CD8-positive, alpha-beta T cell (primary cell): ENCODE measurements at regions of chr2 and their contacts with region 1.

Region 1: DNA sequence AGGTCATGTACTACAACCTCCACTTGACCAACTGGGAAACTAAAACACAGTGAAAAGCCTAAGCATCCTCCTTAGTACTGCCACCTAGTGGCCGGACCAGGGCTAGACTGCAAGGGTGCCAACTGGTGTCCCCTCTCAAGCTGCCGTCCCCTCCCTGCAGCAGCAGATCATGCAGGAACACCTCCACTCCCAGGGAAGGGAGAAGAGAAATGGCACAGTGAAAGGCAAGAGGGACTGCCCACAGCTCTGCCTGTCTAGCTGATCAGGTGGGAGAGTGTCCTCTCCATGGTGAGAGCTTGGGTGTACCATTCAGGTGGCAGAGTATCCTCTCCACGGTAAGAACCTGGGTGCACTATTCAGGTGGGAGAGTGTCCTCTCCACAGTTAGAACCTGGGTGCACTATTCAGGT is 78.1 kb downstream of the AAK1 start:
- DNase-seq: peak; percentile 43 to 83 (median 73)
- ATAC-seq: peak; percentile 79
- H3K4me3 ChIP-seq: no peak overlapping the region
- H3K4me3 Mint-ChIP-seq: peak overlapping the region; percentile 63
- H3K27ac ChIP-seq: no peak overlapping the region
- H3K27ac Mint-ChIP-seq: peak overlapping the region; percentile 72
- H3K4me1 ChIP-seq: peaks cover 91% of the 10 kb centered on the region
- H3K4me1 Mint-ChIP-seq: peaks cover 92% of the 10 kb centered on the region
- H3K27me3 ChIP-seq: no peaks in the 10 kb centered on the region
- H3K27me3 Mint-ChIP-seq: no peaks in the 10 kb centered on the region
- CTCF ChIP-seq: peak; percentile 80

Region 2: GRCh38 chr2:68589963-68590362 is 975.5 kb before region 1 on chr2:
- CTCF ChIA-PET with region 1: no interaction called
- POLR2A ChIA-PET with region 1: no interaction called
- intact Hi-C with region 1: no loop called
- DNase-seq: no peak
- ATAC-seq: no peak
- H3K4me3 ChIP-seq: no peak overlapping the region
- H3K4me3 Mint-ChIP-seq: no peak overlapping the region
- H3K27ac ChIP-seq: no peak overlapping the region
- H3K27ac Mint-ChIP-seq: no peak overlapping the region
- H3K4me1 ChIP-seq: no peaks in the 10 kb centered on the region
- H3K4me1 Mint-ChIP-seq: peaks cover 3% of the 10 kb centered on the region
- H3K27me3 ChIP-seq: no peaks in the 10 kb centered on the region
- H3K27me3 Mint-ChIP-seq: no peaks in the 10 kb centered on the region
- CTCF ChIP-seq: no peak

Region 3: GRCh38 chr2:69581774-69582581 is 16.5 kb after region 1 on chr2:
- CTCF ChIA-PET with region 1: interaction called, 45 read pairs
- POLR2A ChIA-PET with region 1: interaction called, 7 read pairs
- intact Hi-C with region 1: loop called in 1 of 2 experiments (anchors 2 kb)
- DNase-seq: peak in 3 of 9 experiments; percentile 20 to 49 (median 47)
- ATAC-seq: no peak
- H3K4me3 ChIP-seq: no peak overlapping the region
- H3K4me3 Mint-ChIP-seq: peak overlapping the region; percentile 44
- H3K27ac ChIP-seq: peak overlapping the region in 1 of 2 experiments; percentile 4
- H3K27ac Mint-ChIP-seq: peak overlapping the region; percentile 82
- H3K4me1 ChIP-seq: peaks cover 95% of the 10 kb centered on the region
- H3K4me1 Mint-ChIP-seq: peaks cover 89% of the 10 kb centered on the region
- H3K27me3 ChIP-seq: no peaks in the 10 kb centered on the region
- H3K27me3 Mint-ChIP-seq: no peaks in the 10 kb centered on the region
- CTCF ChIP-seq: no peak

Region 4: DNA sequence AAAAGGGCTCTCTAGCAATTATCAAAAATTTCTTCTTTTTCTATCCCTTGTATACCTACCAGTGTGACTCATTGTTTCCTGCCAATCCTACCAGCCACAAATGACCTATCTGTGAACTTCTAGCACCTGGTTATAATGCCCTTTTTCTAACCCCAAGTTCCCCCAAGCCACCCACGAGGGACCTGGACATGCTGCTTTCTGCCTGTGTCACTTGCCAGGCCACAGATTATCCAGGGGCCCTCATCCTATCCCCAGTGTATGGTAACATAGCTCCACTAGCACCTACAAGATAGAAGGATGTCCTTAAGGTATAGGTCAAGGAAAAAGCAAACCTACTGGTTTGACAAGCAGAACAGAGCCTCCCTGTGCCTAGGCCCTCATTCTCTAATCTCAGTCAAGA is 51.3 kb after region 1 on chr2:
- CTCF ChIA-PET with region 1: interaction called, 12 read pairs
- POLR2A ChIA-PET with region 1: no interaction called
- intact Hi-C with region 1: no loop called
- DNase-seq: peak in 5 of 9 experiments; percentile 23 to 58 (median 48)
- ATAC-seq: peak; percentile 44
- H3K4me3 ChIP-seq: no peak overlapping the region
- H3K4me3 Mint-ChIP-seq: peak overlapping the region; percentile 38
- H3K27ac ChIP-seq: peak overlapping the region in 1 of 2 experiments; percentile 26
- H3K27ac Mint-ChIP-seq: no peak overlapping the region
- H3K4me1 ChIP-seq: peaks cover 79% of the 10 kb centered on the region
- H3K4me1 Mint-ChIP-seq: peaks cover 42% of the 10 kb centered on the region
- H3K27me3 ChIP-seq: no peaks in the 10 kb centered on the region
- H3K27me3 Mint-ChIP-seq: no peaks in the 10 kb centered on the region
- CTCF ChIP-seq: no peak

Region 5: GRCh38 chr2:69634196-69634821 is 68.9 kb after region 1 on chr2:
- CTCF ChIA-PET with region 1: interaction called, 23 read pairs
- POLR2A ChIA-PET with region 1: interaction called, 4 read pairs
- intact Hi-C with region 1: no loop called
- DNase-seq: no peak
- ATAC-seq: peak; percentile 40
- H3K4me3 ChIP-seq: no peak overlapping the region
- H3K4me3 Mint-ChIP-seq: no peak overlapping the region
- H3K27ac ChIP-seq: peak overlapping the region in 1 of 2 experiments; percentile 37
- H3K27ac Mint-ChIP-seq: peak overlapping the region; percentile 60
- H3K4me1 ChIP-seq: peaks cover 79% of the 10 kb centered on the region
- H3K4me1 Mint-ChIP-seq: peaks cover 74% of the 10 kb centered on the region
- H3K27me3 ChIP-seq: no peaks in the 10 kb centered on the region
- H3K27me3 Mint-ChIP-seq: no peaks in the 10 kb centered on the region
- CTCF ChIP-seq: no peak

Region 6: GRCh38 chr2:69694894-69695849 is 129.7 kb after region 1 on chr2:
- CTCF ChIA-PET with region 1: interaction called, 16 read pairs
- POLR2A ChIA-PET with region 1: interaction called, 3 read pairs
- intact Hi-C with region 1: no loop called
- DNase-seq: no peak
- ATAC-seq: no peak
- H3K4me3 ChIP-seq: no peak overlapping the region
- H3K4me3 Mint-ChIP-seq: peak overlapping the region; percentile 10
- H3K27ac ChIP-seq: peak overlapping the region in 1 of 2 experiments; percentile 4
- H3K27ac Mint-ChIP-seq: peak overlapping the region; percentile 98
- H3K4me1 ChIP-seq: peaks cover 83% of the 10 kb centered on the region
- H3K4me1 Mint-ChIP-seq: peaks cover 91% of the 10 kb centered on the region
- H3K27me3 ChIP-seq: no peaks in the 10 kb centered on the region
- H3K27me3 Mint-ChIP-seq: no peaks in the 10 kb centered on the region
- CTCF ChIP-seq: no peak

Region 7: GRCh38 chr2:69816923-69817542 is 251.6 kb after region 1 on chr2:
- CTCF ChIA-PET with region 1: interaction called, 24 read pairs
- POLR2A ChIA-PET with region 1: no interaction called
- intact Hi-C with region 1: loop called (anchors 1 to 5 kb)
- DNase-seq: peak; percentile 45 to 88 (median 73)
- ATAC-seq: peak; percentile 96
- H3K4me3 ChIP-seq: no peak overlapping the region
- H3K4me3 Mint-ChIP-seq: no peak overlapping the region
- H3K27ac ChIP-seq: no peak overlapping the region
- H3K27ac Mint-ChIP-seq: no peak overlapping the region
- H3K4me1 ChIP-seq: no peaks in the 10 kb centered on the region
- H3K4me1 Mint-ChIP-seq: peaks cover 3% of the 10 kb centered on the region
- H3K27me3 ChIP-seq: no peaks in the 10 kb centered on the region
- H3K27me3 Mint-ChIP-seq: no peaks in the 10 kb centered on the region
- CTCF ChIP-seq: peak; percentile 94